OCI-LY7 (cell line): ENCODE measurements at regions of chr10 and their contacts with region 1.

Region 1: GRCh38 chr10:121959671-121960070 is 15.3 kb downstream of the NSMCE4A start:
- DNase-seq: no peak
- H3K4me3 ChIP-seq: no peak overlapping the region
- H3K27ac ChIP-seq: no peak overlapping the region
- H3K4me1 ChIP-seq: no peaks in the 10 kb centered on the region
- CTCF ChIP-seq: no peak

Region 2: DNA sequence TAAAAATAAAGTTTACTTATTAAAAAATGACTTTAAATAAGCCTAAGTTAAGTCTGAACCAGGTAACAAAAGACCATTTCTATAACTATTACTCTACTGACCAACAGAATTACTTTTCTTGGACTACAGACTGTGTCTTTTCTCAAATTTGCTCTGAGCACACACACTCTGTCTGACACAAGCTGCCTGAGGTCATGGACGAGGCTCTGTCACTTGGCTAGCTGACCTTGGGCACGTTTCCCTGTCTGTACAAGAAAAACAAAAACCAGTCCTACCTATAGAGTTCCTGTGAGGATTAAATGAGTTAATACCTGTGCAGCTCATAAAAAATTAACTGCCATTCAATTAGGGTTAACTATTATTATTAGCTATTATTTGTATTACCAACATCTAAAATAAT is 54.8 kb before region 1 on chr10:
- CTCF ChIA-PET with region 1: no interaction called
- POLR2A ChIA-PET with region 1: no interaction called
- intact Hi-C with region 1: loop called (anchors 2 kb)
- DNase-seq: no peak
- H3K4me3 ChIP-seq: no peak overlapping the region
- H3K27ac ChIP-seq: no peak overlapping the region
- H3K4me1 ChIP-seq: no peaks in the 10 kb centered on the region
- CTCF ChIP-seq: no peak

Region 3: GRCh38 chr10:121942749-121943416 is 16.8 kb before region 1 on chr10:
- CTCF ChIA-PET with region 1: no interaction called
- POLR2A ChIA-PET with region 1: interaction called, 11 read pairs
- intact Hi-C with region 1: no loop called
- DNase-seq: no peak
- H3K4me3 ChIP-seq: no peak overlapping the region
- H3K27ac ChIP-seq: no peak overlapping the region
- H3K4me1 ChIP-seq: no peaks in the 10 kb centered on the region
- CTCF ChIP-seq: no peak